ENCODE measurements at regions of chr10 and their contacts with region 1.

Region 1: GRCh38 chr10:124916585-124917427 is 25.1 kb upstream of the ZRANB1 start:
- DNase-seq: peak; percentile 96 to 97 (median 96)
- H3K4me3 ChIP-seq: peak overlapping the region; percentile 73 to 93 (median 86)
- H3K4me3 Mint-ChIP-seq: peak overlapping the region; percentile 72 to 91
- H3K27ac ChIP-seq: peak overlapping the region; percentile 56 to 85
- H3K27ac Mint-ChIP-seq: peak overlapping the region; percentile 82 to 89 (median 85)
- H3K4me1 ChIP-seq: peaks cover 26 to 31% of the 10 kb centered on the region in 2 donors
- H3K4me1 Mint-ChIP-seq: peaks cover 41% of the 10 kb centered on the region
- H3K27me3 ChIP-seq: no peaks in the 10 kb centered on the region
- H3K27me3 Mint-ChIP-seq: peaks cover 0 to 2% (median 0%) of the 10 kb centered on the region in 3 donors
- CTCF ChIP-seq: no peak

Region 2: GRCh38 chr10:124671486-124672075 is 245.2 kb before region 1 on chr10:
- intact Hi-C with region 1: no loop called
- DNase-seq: peak; percentile 75 to 81 (median 79)
- H3K4me3 ChIP-seq: no peak overlapping the region
- H3K4me3 Mint-ChIP-seq: peak overlapping the region; percentile 67 to 71
- H3K27ac ChIP-seq: peak overlapping the region; percentile 73 to 83
- H3K27ac Mint-ChIP-seq: peak overlapping the region; percentile 96 to 99 (median 98)
- H3K4me1 ChIP-seq: peaks cover 43 to 60% of the 10 kb centered on the region in 2 donors
- H3K4me1 Mint-ChIP-seq: peaks cover 71% of the 10 kb centered on the region
- H3K27me3 ChIP-seq: no peaks in the 10 kb centered on the region
- H3K27me3 Mint-ChIP-seq: peaks cover 0 to 3% (median 0%) of the 10 kb centered on the region in 3 donors
- CTCF ChIP-seq: peak; percentile 77

Region 3: GRCh38 chr10:124791378-124792348 is 125.1 kb before region 1 on chr10 and contains the start of gene EEF1AKMT2:
- intact Hi-C with region 1: loop called in 1 of 2 experiments (anchors 10 kb)
- DNase-seq: peak; percentile 74 to 82 (median 80)
- H3K4me3 ChIP-seq: peak within 1 kb of the TSS; percentile 83 to 97 (median 96)
- H3K4me3 Mint-ChIP-seq: peak within 1 kb of the TSS; percentile 92 to 96
- H3K27ac ChIP-seq: peak within 1 kb of the TSS; percentile 70 to 94
- H3K27ac Mint-ChIP-seq: peak within 1 kb of the TSS; percentile 80 to 96 (median 93)
- H3K4me1 ChIP-seq: peaks cover 7 to 11% of the 10 kb centered on the region in 2 donors
- H3K4me1 Mint-ChIP-seq: peaks cover 14% of the 10 kb centered on the region
- H3K27me3 ChIP-seq: no peaks in the 10 kb centered on the region
- H3K27me3 Mint-ChIP-seq: peaks cover 0 to 1% (median 0%) of the 10 kb centered on the region in 3 donors
- CTCF ChIP-seq: peak; percentile 46
- polyA plus RNA-seq, gene EEF1AKMT2: 7.6 to 13.6 (median 8.2) TPM

Region 4: GRCh38 chr10:124842721-124843120 is 74.1 kb before region 1 on chr10:
- intact Hi-C with region 1: no loop called
- DNase-seq: no peak
- H3K4me3 ChIP-seq: no peak overlapping the region
- H3K4me3 Mint-ChIP-seq: no peak overlapping the region
- H3K27ac ChIP-seq: no peak overlapping the region
- H3K27ac Mint-ChIP-seq: no peak overlapping the region
- H3K4me1 ChIP-seq: no peaks in the 10 kb centered on the region
- H3K4me1 Mint-ChIP-seq: no peaks in the 10 kb centered on the region
- H3K27me3 ChIP-seq: no peaks in the 10 kb centered on the region
- H3K27me3 Mint-ChIP-seq: peaks cover 1 to 7% (median 3%) of the 10 kb centered on the region in 3 donors
- CTCF ChIP-seq: no peak

Region 5: DNA sequence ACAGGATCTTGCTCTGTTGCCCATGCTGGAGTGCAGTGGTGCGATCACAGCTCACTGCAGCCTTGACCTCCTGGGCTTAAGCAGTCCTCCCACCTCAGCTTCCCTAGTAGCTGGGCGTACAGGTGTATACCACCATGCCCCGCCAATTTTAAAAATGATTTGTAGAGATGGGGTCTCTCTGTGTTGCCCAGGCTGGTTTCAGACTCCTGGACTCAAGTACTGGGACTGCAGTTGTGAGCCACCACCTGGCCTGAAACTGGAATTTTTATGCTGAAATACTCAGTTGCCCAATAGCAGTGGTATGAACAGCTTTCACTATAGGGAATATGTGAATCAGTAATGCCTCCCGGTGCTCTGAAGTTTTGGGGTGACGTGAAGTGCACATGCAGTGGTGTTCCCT is 32.7 kb after region 1 on chr10:
- intact Hi-C with region 1: no loop called
- DNase-seq: no peak
- H3K4me3 ChIP-seq: no peak overlapping the region
- H3K4me3 Mint-ChIP-seq: no peak overlapping the region
- H3K27ac ChIP-seq: no peak overlapping the region
- H3K27ac Mint-ChIP-seq: no peak overlapping the region
- H3K4me1 ChIP-seq: no peaks in the 10 kb centered on the region
- H3K4me1 Mint-ChIP-seq: peaks cover 2% of the 10 kb centered on the region
- H3K27me3 ChIP-seq: no peaks in the 10 kb centered on the region
- H3K27me3 Mint-ChIP-seq: peaks cover 0 to 1% (median 0%) of the 10 kb centered on the region in 3 donors
- CTCF ChIP-seq: no peak

Region 6: DNA sequence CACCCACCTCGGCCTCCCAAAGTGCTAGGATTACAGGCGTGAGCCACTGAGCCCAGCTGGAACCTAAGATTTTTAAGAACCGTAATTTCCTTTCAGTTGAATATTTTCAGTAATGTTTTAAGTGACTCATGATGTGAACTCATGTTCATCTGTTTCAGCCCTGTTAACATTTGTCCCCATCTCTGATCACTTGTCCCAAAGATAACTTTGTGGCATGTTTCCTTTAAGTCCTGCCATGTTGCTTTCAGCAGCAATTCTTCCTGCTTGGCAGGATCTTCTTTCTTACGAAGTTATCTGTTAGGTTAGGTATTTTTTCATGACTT is 44.4 kb after region 1 on chr10:
- intact Hi-C with region 1: loop called in 1 of 2 experiments (anchors 5 kb)
- DNase-seq: no peak
- H3K4me3 ChIP-seq: no peak overlapping the region
- H3K4me3 Mint-ChIP-seq: no peak overlapping the region
- H3K27ac ChIP-seq: no peak overlapping the region
- H3K27ac Mint-ChIP-seq: peak overlapping the region in 4 of 7 donors; percentile 35 to 69 (median 44)
- H3K4me1 ChIP-seq: peaks cover 21 to 32% of the 10 kb centered on the region in 2 donors
- H3K4me1 Mint-ChIP-seq: peaks cover 39% of the 10 kb centered on the region
- H3K27me3 ChIP-seq: no peaks in the 10 kb centered on the region
- H3K27me3 Mint-ChIP-seq: no peaks in the 10 kb centered on the region
- CTCF ChIP-seq: no peak

Region 7: DNA sequence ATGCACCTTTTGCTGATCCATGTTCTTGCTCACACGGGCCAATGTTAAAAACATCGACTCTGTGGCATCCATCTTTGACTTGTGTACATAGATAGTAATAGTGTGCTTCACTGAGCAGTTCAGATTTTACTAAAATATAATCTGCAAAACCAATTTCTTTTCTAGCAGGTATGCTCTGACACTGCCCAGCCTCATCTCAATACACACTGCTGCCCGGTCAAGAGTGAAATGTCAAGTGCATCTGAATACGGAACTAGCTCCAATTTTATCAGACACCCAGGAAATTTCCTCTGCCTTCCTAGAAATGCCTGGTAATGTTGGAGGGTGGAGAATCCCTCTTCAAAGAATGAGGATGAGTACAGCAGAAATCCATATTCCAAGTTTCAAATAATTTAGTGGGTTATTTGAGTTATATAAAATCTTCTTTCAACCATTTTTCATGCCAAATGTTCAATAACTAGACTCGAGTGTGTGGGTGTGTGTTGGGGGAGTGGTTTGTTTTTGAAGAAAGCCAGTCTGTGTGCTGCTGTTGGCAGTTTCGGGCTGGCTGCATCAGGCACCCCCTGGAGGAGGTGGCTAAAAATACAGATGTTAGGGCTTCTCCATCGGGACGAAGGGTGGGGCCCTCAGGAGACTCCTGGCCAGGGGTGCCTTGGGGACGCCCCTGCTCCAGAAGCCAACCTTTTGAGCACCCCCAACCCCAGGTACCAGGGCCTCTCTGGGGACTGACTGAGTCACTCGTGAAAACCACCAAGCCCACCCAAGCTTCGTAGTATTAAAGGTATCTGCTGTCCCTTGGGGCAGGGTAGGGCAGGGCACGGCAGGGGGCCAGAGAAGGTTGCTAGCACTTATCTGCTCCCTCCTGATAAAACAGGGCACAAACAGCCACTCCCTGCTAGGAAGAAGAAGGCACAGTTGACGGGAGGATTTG is 228.2 kb after region 1 on chr10:
- intact Hi-C with region 1: loop called in 1 of 2 experiments (anchors 10 kb)
- DNase-seq: peak in 1 of 3 donors; percentile 24
- H3K4me3 ChIP-seq: no peak overlapping the region
- H3K4me3 Mint-ChIP-seq: peak overlapping the region in 1 of 2 donors; percentile 45
- H3K27ac ChIP-seq: no peak overlapping the region
- H3K27ac Mint-ChIP-seq: peak overlapping the region in 5 of 7 donors; percentile 5 to 79 (median 31)
- H3K4me1 ChIP-seq: peaks cover 54 to 60% of the 10 kb centered on the region in 2 donors
- H3K4me1 Mint-ChIP-seq: peaks cover 75% of the 10 kb centered on the region
- H3K27me3 ChIP-seq: no peaks in the 10 kb centered on the region
- H3K27me3 Mint-ChIP-seq: peaks cover 0 to 1% (median 0%) of the 10 kb centered on the region in 3 donors
- CTCF ChIP-seq: peak; percentile 46

Measured in CD14-positive monocyte (primary cell).